Activated CD4-positive, alpha-beta memory T cell treated with anti-CD3 and anti-CD28 coated beads, Interleukin-2, amount 10 ng/mL, durations not matched to agents 7 days and 5 days (primary cell): ENCODE measurements at regions of chr14 and their contacts with region 1.

Region 1: DNA sequence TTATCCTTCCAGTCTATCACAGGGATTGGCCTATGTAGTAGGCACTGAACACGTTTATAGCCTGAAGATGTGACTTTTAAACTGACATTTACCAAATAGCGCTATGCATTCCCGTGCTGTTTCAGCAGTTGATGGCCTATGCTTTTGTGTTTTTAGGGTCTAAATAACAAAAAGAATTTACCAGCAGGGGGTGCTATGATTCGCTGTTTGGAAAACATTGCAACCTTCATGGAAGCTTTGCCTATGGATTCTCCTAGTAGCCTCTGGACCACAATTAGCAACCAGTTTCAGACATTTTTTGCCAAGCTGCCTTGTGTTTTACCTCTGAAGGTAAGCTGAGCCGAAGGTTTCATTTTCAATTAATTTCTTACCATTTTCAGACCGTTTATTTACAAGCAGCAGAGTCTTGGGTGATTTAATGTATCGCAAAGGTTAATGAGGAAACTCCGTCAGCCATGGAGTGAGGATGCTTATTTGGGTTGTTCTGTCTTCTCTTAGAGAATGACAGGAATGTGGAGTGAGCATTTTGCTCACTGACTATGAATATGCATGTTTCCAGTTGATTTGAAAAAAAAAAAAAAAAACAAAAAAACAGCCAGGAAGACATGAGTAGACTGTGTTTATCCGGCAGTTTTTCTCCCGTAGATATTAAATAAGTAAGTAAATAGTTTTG is 133.1 kb downstream of the PRIMA1 start:
- DNase-seq: no peak
- H3K4me3 Mint-ChIP-seq: no peak overlapping the region
- H3K27ac Mint-ChIP-seq: no peak overlapping the region
- H3K4me1 Mint-ChIP-seq: no peaks in the 10 kb centered on the region
- H3K27me3 Mint-ChIP-seq: peaks cover 19% of the 10 kb centered on the region

Region 2: DNA sequence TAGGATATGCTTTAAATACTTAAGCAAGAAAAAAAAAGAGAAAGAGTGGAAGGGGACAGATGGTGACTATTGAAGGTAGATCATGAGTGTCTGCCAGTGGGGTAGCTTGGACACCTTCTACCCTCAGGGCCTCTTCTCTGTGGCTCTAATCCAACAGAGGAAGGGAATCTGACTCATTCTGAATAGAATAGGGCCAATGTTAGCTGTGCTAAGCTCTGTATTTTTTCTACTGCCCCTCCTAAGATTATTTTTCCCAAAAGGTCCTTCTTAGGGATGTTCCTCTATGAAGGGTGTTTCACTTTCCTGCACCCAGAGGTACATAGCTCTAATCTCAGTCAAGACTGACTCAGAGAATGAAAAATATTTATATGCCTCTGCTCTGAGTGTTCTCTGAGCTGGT is 198.9 kb before region 1 on chr14:
- CTCF ChIA-PET with region 1: no interaction called
- POLR2A ChIA-PET with region 1: no interaction called
- DNase-seq: no peak
- H3K4me3 Mint-ChIP-seq: no peak overlapping the region
- H3K27ac Mint-ChIP-seq: no peak overlapping the region
- H3K4me1 Mint-ChIP-seq: no peaks in the 10 kb centered on the region
- H3K27me3 Mint-ChIP-seq: peaks cover 9% of the 10 kb centered on the region

Region 3: GRCh38 chr14:93892923-93893558 is 237.8 kb after region 1 on chr14:
- CTCF ChIA-PET with region 1: interaction called, 13 read pairs
- POLR2A ChIA-PET with region 1: no interaction called
- DNase-seq: peak; percentile 69
- H3K4me3 Mint-ChIP-seq: no peak overlapping the region
- H3K27ac Mint-ChIP-seq: no peak overlapping the region
- H3K4me1 Mint-ChIP-seq: no peaks in the 10 kb centered on the region
- H3K27me3 Mint-ChIP-seq: peaks cover 14% of the 10 kb centered on the region

Region 4: DNA sequence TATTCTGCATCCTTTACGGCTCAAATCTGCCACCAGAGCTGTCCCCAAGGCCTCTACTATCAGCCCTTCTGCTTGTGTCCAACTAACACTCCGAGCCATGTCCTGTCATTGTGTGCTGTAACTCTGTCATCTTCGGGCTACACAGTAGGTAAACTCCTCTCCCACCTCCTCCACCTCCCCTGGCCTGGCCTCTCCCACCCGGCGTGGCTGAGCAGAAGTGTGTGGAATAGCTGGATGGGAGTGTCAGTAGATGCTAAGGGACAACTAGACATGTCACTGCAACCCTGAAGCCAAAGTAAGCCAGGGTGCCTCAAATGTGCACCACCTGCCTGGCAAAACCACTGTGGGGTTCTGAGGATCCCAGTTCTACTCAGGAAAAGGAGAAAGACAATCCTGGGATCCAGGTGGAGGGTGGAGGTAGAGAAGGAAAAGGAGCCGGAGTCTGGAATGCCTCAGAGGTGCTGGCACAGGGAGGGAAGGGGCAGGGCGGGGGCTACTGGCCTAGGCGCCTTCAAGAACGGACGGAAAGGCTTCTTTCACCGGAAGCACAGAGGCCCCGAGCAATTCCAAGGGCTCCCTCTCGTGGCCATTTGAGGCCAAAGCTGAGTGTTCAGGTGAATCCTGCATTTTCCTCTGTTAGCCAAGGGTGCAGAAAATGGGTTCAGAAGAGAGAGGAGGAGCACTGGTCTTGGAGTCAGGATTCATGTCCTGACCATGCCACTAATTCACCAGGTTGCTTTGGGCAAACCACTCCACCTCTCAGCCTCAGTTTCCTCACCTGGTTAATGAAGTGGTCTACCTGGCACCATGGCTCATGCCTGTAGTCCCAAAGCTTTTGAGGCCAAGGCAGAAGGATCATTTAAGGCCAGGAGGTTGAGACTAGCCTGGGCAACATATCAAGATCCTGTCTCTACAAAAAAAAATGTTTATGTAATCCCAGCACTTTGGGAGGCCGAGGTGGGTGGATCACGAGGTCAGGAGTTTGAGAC is 251.4 kb after region 1 on chr14:
- CTCF ChIA-PET with region 1: interaction called, 13 read pairs
- POLR2A ChIA-PET with region 1: no interaction called
- DNase-seq: peak; percentile 77
- H3K4me3 Mint-ChIP-seq: no peak overlapping the region
- H3K27ac Mint-ChIP-seq: no peak overlapping the region
- H3K4me1 Mint-ChIP-seq: peaks cover 3% of the 10 kb centered on the region
- H3K27me3 Mint-ChIP-seq: peaks cover 18% of the 10 kb centered on the region